ENCODE measurements at regions of chr19 and their contacts with region 1.

Region 1: DNA sequence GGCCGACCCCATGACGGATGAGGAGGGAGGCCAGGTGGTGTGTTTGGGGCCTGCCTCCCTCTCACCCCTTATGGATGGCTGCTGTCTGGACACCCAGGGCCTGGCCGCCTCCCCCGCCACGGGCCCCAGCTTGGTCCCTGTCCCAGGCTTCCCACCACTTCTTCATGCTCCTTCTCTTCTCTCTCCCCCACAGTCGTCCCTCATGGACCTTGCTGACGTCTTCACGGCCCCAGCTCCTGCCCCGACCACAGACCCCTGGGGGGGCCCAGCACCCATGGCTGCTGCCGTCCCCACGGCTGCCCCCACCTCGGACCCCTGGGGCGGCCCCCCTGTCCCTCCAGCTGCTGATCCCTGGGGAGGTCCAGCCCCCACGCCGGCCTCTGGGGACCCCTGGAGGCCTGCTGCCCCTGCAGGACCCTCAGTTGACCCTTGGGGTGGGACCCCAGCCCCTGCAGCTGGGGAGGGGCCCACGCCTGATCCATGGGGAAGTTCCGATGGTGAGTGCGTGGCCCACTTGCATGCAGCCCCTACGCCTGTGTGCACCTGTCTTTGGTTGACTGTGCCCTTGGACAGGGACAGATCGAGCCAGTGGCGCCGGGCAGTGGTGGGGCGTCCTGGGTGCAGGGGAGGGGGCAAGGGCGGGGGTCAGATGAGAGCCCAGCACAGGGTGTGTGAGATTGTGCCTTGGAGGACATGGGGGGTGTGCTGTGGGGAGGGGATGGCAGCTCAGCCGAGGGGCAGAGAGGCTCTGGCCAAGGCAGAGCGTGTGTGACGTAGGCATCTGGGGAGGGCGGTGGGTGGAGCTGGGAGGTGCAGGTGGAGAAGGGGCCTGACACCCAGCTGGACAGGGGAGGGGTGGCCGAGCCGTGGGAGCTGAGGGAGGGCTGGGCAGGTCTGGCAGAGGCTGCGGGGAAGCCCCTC is 16.8 kb downstream of the EPN1 start:
- DNase-seq: no peak
- ATAC-seq: no peak
- H3K4me3 ChIP-seq: no peak overlapping the region
- H3K27ac ChIP-seq: no peak overlapping the region
- H3K4me1 ChIP-seq: peaks cover 3% of the 10 kb centered on the region; the same call in 1 of the 2 replicates
- H3K27me3 ChIP-seq: no peaks in the 10 kb centered on the region
- CTCF ChIP-seq: no peak

Region 2: GRCh38 chr19:55643348-55644176 is 48.3 kb before region 1 on chr19 and contains the start of gene ZNF581:
- CTCF ChIA-PET with region 1: no interaction called
- POLR2A ChIA-PET with region 1: no interaction called
- in situ Hi-C with region 1: no loop called
- intact Hi-C with region 1: no loop called
- DNase-seq: no peak
- ATAC-seq: peak; percentile 55
- H3K4me3 ChIP-seq: peak within 1 kb of the TSS; percentile 63 to 93
- H3K27ac ChIP-seq: peak within 1 kb of the TSS; percentile 96
- H3K4me1 ChIP-seq: peaks cover 43% of the 10 kb centered on the region
- H3K27me3 ChIP-seq: no peaks in the 10 kb centered on the region
- CTCF ChIP-seq: no peak
- total RNA-seq, gene ZNF581: 39.0 TPM

Region 3: GRCh38 chr19:55667958-55668357 is 23.9 kb before region 1 on chr19:
- CTCF ChIA-PET with region 1: no interaction called
- POLR2A ChIA-PET with region 1: no interaction called
- in situ Hi-C with region 1: no loop called
- intact Hi-C with region 1: no loop called
- DNase-seq: no peak
- ATAC-seq: no peak
- H3K4me3 ChIP-seq: no peak overlapping the region
- H3K27ac ChIP-seq: peak overlapping the region; percentile 96
- H3K4me1 ChIP-seq: peaks cover 69% of the 10 kb centered on the region
- H3K27me3 ChIP-seq: no peaks in the 10 kb centered on the region
- CTCF ChIP-seq: no peak

Region 4: DNA sequence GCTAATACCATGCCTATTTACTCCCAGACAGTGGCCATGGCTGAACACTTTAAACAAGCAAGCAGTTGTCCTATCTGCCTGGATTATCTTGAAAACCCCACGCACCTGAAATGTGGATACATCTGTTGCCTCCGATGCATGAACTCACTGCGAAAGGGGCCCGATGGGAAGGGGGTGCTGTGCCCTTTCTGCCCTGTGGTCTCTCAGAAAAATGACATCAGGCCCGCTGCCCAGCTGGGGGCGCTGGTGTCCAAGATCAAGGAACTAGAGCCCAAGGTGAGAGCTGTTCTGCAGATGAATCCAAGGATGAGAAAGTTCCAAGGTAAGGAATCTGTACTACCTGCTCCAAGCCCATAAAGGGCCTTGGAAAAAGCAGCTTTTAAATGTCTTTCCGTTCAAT is 85.7 kb after region 1 on chr19:
- CTCF ChIA-PET with region 1: interaction called, 14 read pairs
- POLR2A ChIA-PET with region 1: no interaction called
- in situ Hi-C with region 1: no loop called
- intact Hi-C with region 1: no loop called
- DNase-seq: peak; percentile 2
- ATAC-seq: no peak
- H3K4me3 ChIP-seq: no peak overlapping the region
- H3K27ac ChIP-seq: no peak overlapping the region
- H3K4me1 ChIP-seq: 0 out of 2 replicates have a peak, but pooled peaks cover 3% of the 10 kb centered on the region
- H3K27me3 ChIP-seq: peaks cover 6% of the 10 kb centered on the region; the same call in 1 of the 2 replicates
- CTCF ChIP-seq: peak; percentile 76

Measured in Panc1 (cell line).